AG04450 (cell line): ENCODE measurements at regions of chr11 and their contacts with region 1.

Region 1: DNA sequence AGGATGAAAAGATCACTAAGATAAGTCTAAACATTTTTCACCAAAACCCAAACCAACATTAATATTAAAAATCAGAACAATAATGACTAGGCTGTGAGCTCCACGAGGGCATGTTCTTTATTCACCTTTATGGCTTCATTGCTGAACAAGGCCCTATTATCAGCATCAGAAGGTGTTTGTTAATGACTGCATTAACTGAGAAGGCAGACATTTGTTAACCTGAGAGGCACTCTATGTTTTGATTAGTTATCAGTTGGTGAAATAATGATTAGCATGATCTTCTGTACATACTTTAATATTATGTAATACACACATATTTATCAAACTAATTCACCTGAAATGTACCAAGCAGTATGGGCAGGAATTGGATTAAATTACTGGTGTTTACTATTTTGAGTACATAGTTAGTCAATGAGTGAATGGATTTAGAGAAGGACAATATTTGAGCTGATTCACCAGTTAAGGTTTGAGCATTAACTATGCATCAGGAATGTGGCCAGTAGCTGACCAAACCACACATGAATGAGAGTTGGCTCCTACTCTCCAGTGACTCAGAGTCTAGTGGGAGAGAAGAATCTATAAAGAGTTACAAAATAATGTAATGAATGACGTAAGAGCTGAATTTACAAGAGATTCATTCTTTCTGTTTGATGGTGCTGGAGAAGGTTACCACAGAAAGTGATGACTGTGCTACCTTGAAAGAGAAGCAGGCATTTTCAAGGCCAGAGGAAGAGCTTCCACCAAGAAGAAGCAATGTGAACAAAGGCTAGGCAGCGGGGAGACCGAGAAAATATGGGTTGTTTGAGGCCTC is 6.7 kb downstream of the IL18 start:
- DNase-seq: peak; percentile 96
- H3K4me3 ChIP-seq: no peak overlapping the region
- H3K27ac ChIP-seq: peak overlapping the region; percentile 84
- H3K27me3 ChIP-seq: no peaks in the 10 kb centered on the region
- CTCF ChIP-seq: no peak

Region 2: GRCh38 chr11:112100462-112100861 is 56.7 kb before region 1 on chr11:
- CTCF ChIA-PET with region 1: no interaction called
- POLR2A ChIA-PET with region 1: interaction called, 11 read pairs
- DNase-seq: peak; percentile 45
- H3K4me3 ChIP-seq: no peak overlapping the region
- H3K27ac ChIP-seq: peak overlapping the region; percentile 78
- H3K27me3 ChIP-seq: no peaks in the 10 kb centered on the region
- CTCF ChIP-seq: no peak